Common myeloid progenitor, CD34-positive (primary cell): ENCODE measurements at regions of chr12 and their contacts with region 1.

Region 1: GRCh38 chr12:57175428-57176138 is 28.2 kb upstream of the LRP1-AS start:
- DNase-seq: peak; percentile 18 to 50 (median 33)
- H3K4me3 ChIP-seq: no peak overlapping the region
- H3K27ac ChIP-seq: no peak overlapping the region
- H3K4me1 ChIP-seq: no peaks in the 10 kb centered on the region
- H3K27me3 ChIP-seq: peaks cover 0 to 1% (median 0%) of the 10 kb centered on the region in 5 experiments

Region 2: GRCh38 chr12:57148469-57149244 is 26.9 kb before region 1 on chr12:
- CTCF ChIA-PET with region 1: interaction called, 13 read pairs
- POLR2A ChIA-PET with region 1: no interaction called
- DNase-seq: no peak
- H3K4me3 ChIP-seq: no peak overlapping the region
- H3K27ac ChIP-seq: no peak overlapping the region
- H3K4me1 ChIP-seq: peaks cover 0 to 39% (median 14%) of the 10 kb centered on the region in 4 experiments
- H3K27me3 ChIP-seq: no peaks in the 10 kb centered on the region

Region 3: GRCh38 chr12:57157588-57158173 is 17.9 kb before region 1 on chr12:
- CTCF ChIA-PET with region 1: interaction called, 16 read pairs
- POLR2A ChIA-PET with region 1: no interaction called
- DNase-seq: peak; percentile 49 to 90 (median 90)
- H3K4me3 ChIP-seq: no peak overlapping the region
- H3K27ac ChIP-seq: no peak overlapping the region
- H3K4me1 ChIP-seq: peaks cover 2 to 58% (median 19%) of the 10 kb centered on the region in 4 experiments
- H3K27me3 ChIP-seq: no peaks in the 10 kb centered on the region

Region 4: GRCh38 chr12:57216195-57216911 is 40.8 kb after region 1 on chr12 and contains the start of gene NXPH4:
- CTCF ChIA-PET with region 1: no interaction called
- POLR2A ChIA-PET with region 1: no interaction called
- DNase-seq: no peak
- H3K4me3 ChIP-seq: peak within 1 kb of the TSS in 3 of 7 experiments; percentile 34 to 55 (median 54)
- H3K27ac ChIP-seq: no peak within 1 kb of the TSS
- H3K4me1 ChIP-seq: peaks cover 0 to 22% (median 13%) of the 10 kb centered on the region in 4 experiments
- H3K27me3 ChIP-seq: peaks cover 9 to 79% (median 54%) of the 10 kb centered on the region in 5 experiments